ENCODE measurements at regions of chr13 and their contacts with region 1.

Region 1: GRCh38 chr13:48580185-48580803 is 47.4 kb upstream of the RCBTB2 start:
- DNase-seq: no peak
- ATAC-seq: peak; percentile 46
- H3K4me3 ChIP-seq: no peak overlapping the region
- H3K27ac ChIP-seq: no peak overlapping the region; the same call in 1 of the 2 replicates
- H3K4me1 ChIP-seq: peaks cover 39% of the 10 kb centered on the region
- H3K27me3 ChIP-seq: no peaks in the 10 kb centered on the region
- CTCF ChIP-seq: peak; percentile 63 to 72 (median 64); a peak in 5 of 6 replicates
- EP300 ChIP-seq: no peak
- POLR2A ChIP-seq: no peak
- RAD21 ChIP-seq: peak; percentile 90

Region 2: GRCh38 chr13:47917022-47917574 is 663.2 kb before region 1 on chr13:
- CTCF ChIA-PET with region 1: no interaction called
- POLR2A ChIA-PET with region 1: no interaction called
- RAD21 ChIA-PET with region 1: no interaction called
- SMC1A ChIA-PET with region 1: no interaction called
- in situ Hi-C with region 1: no loop called
- intact Hi-C with region 1: no loop called
- DNase-seq: no peak
- ATAC-seq: no peak
- H3K4me3 ChIP-seq: no peak overlapping the region
- H3K27ac ChIP-seq: no peak overlapping the region
- H3K4me1 ChIP-seq: no peaks in the 10 kb centered on the region
- H3K27me3 ChIP-seq: no peaks in the 10 kb centered on the region
- CTCF ChIP-seq: no peak
- EP300 ChIP-seq: no peak
- POLR2A ChIP-seq: no peak
- RAD21 ChIP-seq: no peak

Region 3: GRCh38 chr13:47932950-47933923 is 647.1 kb before region 1 on chr13:
- CTCF ChIA-PET with region 1: no interaction called
- POLR2A ChIA-PET with region 1: no interaction called
- RAD21 ChIA-PET with region 1: no interaction called
- SMC1A ChIA-PET with region 1: no interaction called
- in situ Hi-C with region 1: no loop called
- intact Hi-C with region 1: no loop called
- DNase-seq: no peak
- ATAC-seq: peak; percentile 59
- H3K4me3 ChIP-seq: no peak overlapping the region
- H3K27ac ChIP-seq: no peak overlapping the region
- H3K4me1 ChIP-seq: no peaks in the 10 kb centered on the region
- H3K27me3 ChIP-seq: no peaks in the 10 kb centered on the region
- CTCF ChIP-seq: no peak
- EP300 ChIP-seq: no peak
- POLR2A ChIP-seq: no peak
- RAD21 ChIP-seq: no peak

Region 4: DNA sequence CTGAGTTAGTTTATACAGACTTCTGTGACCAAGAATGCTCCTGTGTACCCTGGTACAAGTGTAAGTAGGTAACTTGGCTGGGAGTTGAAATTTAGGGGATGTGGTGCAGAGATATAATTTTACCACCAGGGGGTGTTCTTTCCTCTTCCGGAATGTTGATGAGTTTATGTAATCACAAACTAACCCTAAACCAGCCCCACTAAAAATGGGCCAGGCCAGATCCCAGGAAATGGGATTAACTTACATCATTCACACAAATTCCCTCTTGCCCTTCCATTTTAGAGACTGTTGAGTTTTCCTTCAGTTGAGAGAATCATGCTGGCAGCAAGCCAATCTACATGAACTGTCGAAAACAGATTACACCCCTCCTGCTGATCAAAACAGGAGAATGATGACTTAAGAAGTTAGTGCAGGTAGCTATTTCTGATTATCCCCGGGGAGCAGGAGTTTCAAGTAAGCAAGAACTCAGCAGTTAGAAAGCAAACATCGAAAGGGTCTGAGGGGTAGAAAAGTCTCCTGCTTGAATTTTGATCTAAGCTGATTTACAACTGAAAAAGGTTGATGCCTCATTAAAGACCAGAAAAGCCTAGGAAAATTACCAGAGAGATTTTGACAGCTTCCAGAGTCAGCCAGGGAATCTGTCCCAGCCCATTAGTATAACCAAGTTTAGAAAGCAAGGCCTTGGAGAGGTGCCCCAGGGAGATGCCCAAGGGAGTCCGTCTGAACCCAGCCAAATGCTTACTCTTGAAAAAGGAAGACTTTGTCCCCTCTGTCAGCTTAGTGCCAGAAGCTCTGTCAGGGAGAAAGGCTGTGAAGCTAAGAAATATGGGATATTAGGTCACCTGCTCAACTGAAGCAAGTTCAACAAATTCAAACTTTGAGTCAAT is 453.1 kb before region 1 on chr13:
- CTCF ChIA-PET with region 1: interaction called, 44 read pairs
- POLR2A ChIA-PET with region 1: interaction called, 4 read pairs
- RAD21 ChIA-PET with region 1: interaction called, 23 read pairs
- SMC1A ChIA-PET with region 1: interaction called, 48 read pairs
- in situ Hi-C with region 1: loop called (anchors 5 kb)
- intact Hi-C with region 1: loop called (anchors 2 kb)
- DNase-seq: peak; percentile 47
- ATAC-seq: peak; percentile 93
- H3K4me3 ChIP-seq: no peak overlapping the region
- H3K27ac ChIP-seq: no peak overlapping the region
- H3K4me1 ChIP-seq: no peaks in the 10 kb centered on the region
- H3K27me3 ChIP-seq: peaks cover 0 to 2% of the 10 kb centered on the region in 2 experiments; a peak in 2 of 4 replicates
- CTCF ChIP-seq: peak; percentile 58 to 72 (median 65)
- EP300 ChIP-seq: no peak
- POLR2A ChIP-seq: no peak
- RAD21 ChIP-seq: peak; percentile 69

Region 5: DNA sequence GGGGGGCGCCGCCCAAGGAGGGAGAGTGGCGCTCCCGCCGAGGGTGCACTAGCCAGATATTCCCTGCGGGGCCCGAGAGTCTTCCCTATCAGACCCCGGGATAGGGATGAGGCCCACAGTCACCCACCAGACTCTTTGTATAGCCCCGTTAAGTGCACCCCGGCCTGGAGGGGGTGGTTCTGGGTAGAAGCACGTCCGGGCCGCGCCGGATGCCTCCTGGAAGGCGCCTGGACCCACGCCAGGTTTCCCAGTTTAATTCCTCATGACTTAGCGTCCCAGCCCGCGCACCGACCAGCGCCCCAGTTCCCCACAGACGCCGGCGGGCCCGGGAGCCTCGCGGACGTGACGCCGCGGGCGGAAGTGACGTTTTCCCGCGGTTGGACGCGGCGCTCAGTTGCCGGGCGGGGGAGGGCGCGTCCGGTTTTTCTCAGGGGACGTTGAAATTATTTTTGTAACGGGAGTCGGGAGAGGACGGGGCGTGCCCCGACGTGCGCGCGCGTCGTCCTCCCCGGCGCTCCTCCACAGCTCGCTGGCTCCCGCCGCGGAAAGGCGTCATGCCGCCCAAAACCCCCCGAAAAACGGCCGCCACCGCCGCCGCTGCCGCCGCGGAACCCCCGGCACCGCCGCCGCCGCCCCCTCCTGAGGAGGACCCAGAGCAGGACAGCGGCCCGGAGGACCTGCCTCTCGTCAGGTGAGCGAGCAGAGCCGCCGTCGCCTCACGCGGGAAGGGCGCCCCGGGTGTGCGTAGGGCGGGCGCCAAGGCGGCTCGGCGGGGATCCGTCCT is 276.7 kb before region 1 on chr13 and contains the start of gene RB1:
- CTCF ChIA-PET with region 1: interaction called, 6 read pairs
- POLR2A ChIA-PET with region 1: no interaction called
- RAD21 ChIA-PET with region 1: interaction called, 8 read pairs
- SMC1A ChIA-PET with region 1: interaction called, 16 read pairs
- in situ Hi-C with region 1: no loop called
- intact Hi-C with region 1: no loop called
- DNase-seq: peak; percentile 51
- ATAC-seq: peak; percentile 73
- H3K4me3 ChIP-seq: peak within 1 kb of the TSS; percentile 87
- H3K27ac ChIP-seq: peak within 1 kb of the TSS; percentile 88
- H3K4me1 ChIP-seq: peaks cover 8% of the 10 kb centered on the region; the same call in 1 of the 2 replicates
- H3K27me3 ChIP-seq: no peaks in the 10 kb centered on the region
- CTCF ChIP-seq: 0 out of 6 replicates have a peak, but pooled peaks of 1 of the 3 experiments have one; percentile 5
- EP300 ChIP-seq: no peak
- POLR2A ChIP-seq: peak; percentile 91
- RAD21 ChIP-seq: no peak
- polyA plus RNA-seq, gene RB1: 2.8 to 3.6 TPM

Region 6: GRCh38 chr13:48400850-48401291 is 179.4 kb before region 1 on chr13:
- CTCF ChIA-PET with region 1: interaction called, 52 read pairs
- POLR2A ChIA-PET with region 1: interaction called, 3 read pairs
- RAD21 ChIA-PET with region 1: interaction called, 70 read pairs
- SMC1A ChIA-PET with region 1: interaction called, 47 read pairs
- in situ Hi-C with region 1: no loop called
- intact Hi-C with region 1: loop called (anchors 2 kb)
- DNase-seq: peak; percentile 25
- ATAC-seq: peak; percentile 73
- H3K4me3 ChIP-seq: no peak overlapping the region
- H3K27ac ChIP-seq: peak overlapping the region; percentile 0; the same call in 1 of the 2 replicates
- H3K4me1 ChIP-seq: peaks cover 25% of the 10 kb centered on the region; the same call in 1 of the 2 replicates
- H3K27me3 ChIP-seq: no peaks in the 10 kb centered on the region
- CTCF ChIP-seq: peak; percentile 2 to 44 (median 14); a peak in 1 of 6 replicates
- EP300 ChIP-seq: no peak
- POLR2A ChIP-seq: no peak
- RAD21 ChIP-seq: peak; percentile 35

Region 7: DNA sequence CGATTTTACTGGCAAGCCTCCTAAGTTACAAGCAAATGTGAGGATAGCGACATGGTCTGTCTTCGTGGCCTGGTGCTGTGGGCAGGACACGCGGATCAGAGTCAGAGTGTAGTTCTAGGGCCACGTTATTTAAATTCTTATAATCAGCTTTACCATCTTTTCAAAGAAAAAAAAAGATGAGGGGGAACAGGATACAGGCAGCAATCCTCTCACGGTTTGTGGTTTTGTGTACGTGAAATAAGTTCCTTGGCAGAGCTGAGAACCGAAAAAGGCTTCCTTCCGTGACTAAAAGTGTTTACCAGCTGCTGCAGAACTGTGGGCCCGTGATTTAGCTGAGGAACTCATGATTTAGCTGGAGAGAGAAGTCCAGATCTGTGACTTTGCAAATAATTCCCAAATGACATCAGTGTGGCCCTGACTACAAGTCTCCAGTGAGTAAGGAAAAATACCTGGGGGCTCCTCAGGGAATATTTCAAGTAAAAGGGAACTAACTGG is 74.7 kb before region 1 on chr13:
- CTCF ChIA-PET with region 1: interaction called, 5 read pairs
- POLR2A ChIA-PET with region 1: interaction called, 5 read pairs
- RAD21 ChIA-PET with region 1: interaction called, 4 read pairs
- SMC1A ChIA-PET with region 1: interaction called, 26 read pairs
- in situ Hi-C with region 1: loop called (anchors 5 kb)
- intact Hi-C with region 1: loop called (anchors 1 kb)
- DNase-seq: peak; percentile 93
- ATAC-seq: peak; percentile 91
- H3K4me3 ChIP-seq: peak overlapping the region; percentile 36
- H3K27ac ChIP-seq: peak overlapping the region; percentile 85
- H3K4me1 ChIP-seq: peaks cover 61% of the 10 kb centered on the region
- H3K27me3 ChIP-seq: no peaks in the 10 kb centered on the region
- CTCF ChIP-seq: no peak
- EP300 ChIP-seq: peak; percentile 75 to 90; a peak in 2 of 4 replicates
- POLR2A ChIP-seq: no peak
- RAD21 ChIP-seq: 0 out of 2 replicates have a peak, but pooled peaks have one; percentile 11

Region 8: GRCh38 chr13:48595431-48596429 is 15.4 kb after region 1 on chr13:
- CTCF ChIA-PET with region 1: interaction called, 20 read pairs
- POLR2A ChIA-PET with region 1: no interaction called
- RAD21 ChIA-PET with region 1: interaction called, 6 read pairs
- SMC1A ChIA-PET with region 1: interaction called, 7 read pairs
- in situ Hi-C with region 1: no loop called
- intact Hi-C with region 1: no loop called
- DNase-seq: no peak
- ATAC-seq: peak; percentile 88
- H3K4me3 ChIP-seq: no peak overlapping the region
- H3K27ac ChIP-seq: no peak overlapping the region
- H3K4me1 ChIP-seq: peaks cover 16% of the 10 kb centered on the region
- H3K27me3 ChIP-seq: no peaks in the 10 kb centered on the region; a peak in 1 of 4 replicates
- CTCF ChIP-seq: peak; percentile 57 to 81 (median 69); a peak in 5 of 6 replicates
- EP300 ChIP-seq: no peak
- POLR2A ChIP-seq: no peak
- RAD21 ChIP-seq: peak; percentile 79

Region 9: GRCh38 chr13:48615049-48615448 is 34.8 kb after region 1 on chr13:
- CTCF ChIA-PET with region 1: no interaction called
- POLR2A ChIA-PET with region 1: no interaction called
- RAD21 ChIA-PET with region 1: no interaction called
- SMC1A ChIA-PET with region 1: no interaction called
- in situ Hi-C with region 1: no loop called
- intact Hi-C with region 1: no loop called
- DNase-seq: no peak
- ATAC-seq: no peak
- H3K4me3 ChIP-seq: no peak overlapping the region
- H3K27ac ChIP-seq: no peak overlapping the region
- H3K4me1 ChIP-seq: no peaks in the 10 kb centered on the region
- H3K27me3 ChIP-seq: no peaks in the 10 kb centered on the region
- CTCF ChIP-seq: no peak
- EP300 ChIP-seq: no peak
- POLR2A ChIP-seq: no peak
- RAD21 ChIP-seq: no peak

Region 10: GRCh38 chr13:48662226-48662625 is 81.9 kb after region 1 on chr13:
- CTCF ChIA-PET with region 1: no interaction called
- POLR2A ChIA-PET with region 1: no interaction called
- RAD21 ChIA-PET with region 1: no interaction called
- SMC1A ChIA-PET with region 1: no interaction called
- in situ Hi-C with region 1: no loop called
- intact Hi-C with region 1: no loop called
- DNase-seq: no peak
- ATAC-seq: no peak
- H3K4me3 ChIP-seq: no peak overlapping the region
- H3K27ac ChIP-seq: no peak overlapping the region
- H3K4me1 ChIP-seq: peaks cover 11% of the 10 kb centered on the region
- H3K27me3 ChIP-seq: no peaks in the 10 kb centered on the region
- CTCF ChIP-seq: no peak
- EP300 ChIP-seq: no peak
- POLR2A ChIP-seq: no peak
- RAD21 ChIP-seq: no peak

Measured in GM12878 (cell line).